ENCODE measurements at regions of chr13 and their contacts with region 1.

Region 1: GRCh38 chr13:30306762-30307193 is 573 bp downstream of the KATNAL1 start:
- DNase-seq: peak; percentile 92
- H3K4me3 Mint-ChIP-seq: peak overlapping the region; percentile 77
- H3K27ac Mint-ChIP-seq: peak overlapping the region; percentile 78
- H3K4me1 Mint-ChIP-seq: peaks cover 49% of the 10 kb centered on the region
- H3K27me3 Mint-ChIP-seq: no peaks in the 10 kb centered on the region

Region 2: DNA sequence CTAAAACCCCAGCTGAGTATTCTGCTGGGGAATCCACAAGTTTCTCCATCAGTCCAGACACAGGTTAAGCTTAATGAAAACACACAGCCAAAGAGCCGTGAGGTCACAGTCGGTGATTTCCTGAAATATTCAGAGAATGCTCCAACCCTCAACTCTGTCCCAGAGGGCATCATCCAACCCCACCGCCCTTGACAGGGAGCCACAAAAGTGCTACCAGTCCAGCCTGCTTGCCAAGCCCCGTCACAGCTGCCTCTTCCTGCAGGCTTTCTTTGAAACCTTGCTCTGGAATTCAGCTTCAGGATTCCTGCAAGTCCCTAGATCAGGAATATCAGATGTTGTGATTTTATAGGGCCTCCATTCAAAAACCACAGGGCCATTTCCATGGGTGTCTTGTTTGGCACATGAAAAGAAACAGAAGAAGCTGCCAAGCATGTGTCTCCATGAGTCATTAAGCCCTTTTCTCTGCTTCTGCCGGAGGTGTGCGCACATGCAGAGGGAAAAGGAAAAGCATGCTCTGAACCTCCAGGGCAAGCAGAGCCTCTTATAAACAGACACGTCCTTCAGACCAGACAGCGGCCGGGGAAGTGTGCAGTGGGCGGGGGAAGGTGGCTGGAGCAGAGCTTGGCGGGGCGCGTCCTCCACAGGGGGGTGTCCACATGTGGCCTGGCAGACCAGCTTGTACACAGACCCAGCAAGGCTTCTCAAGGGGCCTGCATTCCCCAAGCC is 164.1 kb before region 1 on chr13:
- CTCF ChIA-PET with region 1: interaction called, 3 read pairs
- POLR2A ChIA-PET with region 1: interaction called, 25 read pairs
- DNase-seq: peak; percentile 53
- H3K4me3 Mint-ChIP-seq: no peak overlapping the region
- H3K27ac Mint-ChIP-seq: peak overlapping the region; percentile 71
- H3K4me1 Mint-ChIP-seq: peaks cover 62% of the 10 kb centered on the region
- H3K27me3 Mint-ChIP-seq: no peaks in the 10 kb centered on the region

Region 3: DNA sequence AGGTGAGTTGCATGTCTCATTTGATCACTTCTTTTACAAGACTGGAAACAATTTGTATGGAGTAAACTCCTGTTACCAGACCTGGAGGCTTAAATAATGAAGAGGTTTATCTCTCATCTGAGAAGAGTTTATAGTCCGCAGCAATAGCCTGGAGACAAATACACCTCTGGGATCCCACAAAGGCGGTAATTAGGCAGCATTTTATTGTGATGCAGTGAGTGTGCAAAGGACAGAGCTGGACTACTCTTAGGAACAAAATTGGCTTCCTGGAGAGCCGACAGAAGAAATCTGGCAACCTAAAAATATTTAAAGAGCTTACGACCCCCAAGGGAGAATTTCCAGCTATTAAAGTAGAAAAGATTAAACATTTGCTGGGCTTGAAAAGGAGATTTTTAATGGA is 12.4 kb after region 1 on chr13:
- CTCF ChIA-PET with region 1: interaction called, 4 read pairs
- POLR2A ChIA-PET with region 1: interaction called, 12 read pairs
- DNase-seq: no peak
- H3K4me3 Mint-ChIP-seq: no peak overlapping the region
- H3K27ac Mint-ChIP-seq: no peak overlapping the region
- H3K4me1 Mint-ChIP-seq: peaks cover 2% of the 10 kb centered on the region
- H3K27me3 Mint-ChIP-seq: no peaks in the 10 kb centered on the region

Region 4: GRCh38 chr13:30334663-30335386 is 28.0 kb after region 1 on chr13:
- CTCF ChIA-PET with region 1: interaction called, 10 read pairs
- POLR2A ChIA-PET with region 1: interaction called, 6 read pairs
- DNase-seq: peak; percentile 21
- H3K4me3 Mint-ChIP-seq: no peak overlapping the region
- H3K27ac Mint-ChIP-seq: no peak overlapping the region
- H3K4me1 Mint-ChIP-seq: peaks cover 17% of the 10 kb centered on the region
- H3K27me3 Mint-ChIP-seq: no peaks in the 10 kb centered on the region

Region 5: DNA sequence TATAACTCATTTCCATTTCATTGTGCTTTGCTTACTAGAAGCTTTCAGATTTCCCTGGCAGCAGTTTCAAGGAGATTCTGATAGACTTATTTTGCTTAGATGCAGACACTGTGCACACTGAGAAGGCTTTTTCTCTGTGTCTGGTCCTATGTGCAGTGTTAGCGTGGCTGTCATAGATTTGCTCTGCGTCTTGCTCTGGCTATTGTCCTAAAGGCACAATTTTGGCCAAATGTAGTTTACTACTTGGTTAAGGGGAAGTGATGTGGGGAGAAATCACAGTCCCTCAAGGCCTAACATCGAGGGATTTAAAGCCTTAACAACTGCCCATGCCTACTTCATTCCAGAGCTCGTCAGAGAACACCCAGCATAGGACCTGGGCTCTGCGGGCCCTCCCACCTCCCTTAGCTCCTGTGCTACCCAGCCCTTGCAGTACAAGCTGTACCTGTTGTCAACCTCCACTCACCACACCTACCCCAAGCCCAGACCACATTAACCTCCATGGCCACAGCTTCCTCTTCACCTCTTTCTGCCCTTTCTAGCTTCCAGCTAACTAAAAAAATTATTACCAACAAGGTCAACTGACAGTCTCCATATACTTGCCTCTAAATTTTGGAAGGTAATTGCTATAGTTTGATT is 39.5 kb after region 1 on chr13:
- CTCF ChIA-PET with region 1: interaction called, 6 read pairs
- POLR2A ChIA-PET with region 1: interaction called, 18 read pairs
- DNase-seq: peak; percentile 91
- H3K4me3 Mint-ChIP-seq: peak overlapping the region; percentile 38
- H3K27ac Mint-ChIP-seq: peak overlapping the region; percentile 60
- H3K4me1 Mint-ChIP-seq: peaks cover 37% of the 10 kb centered on the region
- H3K27me3 Mint-ChIP-seq: no peaks in the 10 kb centered on the region

Region 6: DNA sequence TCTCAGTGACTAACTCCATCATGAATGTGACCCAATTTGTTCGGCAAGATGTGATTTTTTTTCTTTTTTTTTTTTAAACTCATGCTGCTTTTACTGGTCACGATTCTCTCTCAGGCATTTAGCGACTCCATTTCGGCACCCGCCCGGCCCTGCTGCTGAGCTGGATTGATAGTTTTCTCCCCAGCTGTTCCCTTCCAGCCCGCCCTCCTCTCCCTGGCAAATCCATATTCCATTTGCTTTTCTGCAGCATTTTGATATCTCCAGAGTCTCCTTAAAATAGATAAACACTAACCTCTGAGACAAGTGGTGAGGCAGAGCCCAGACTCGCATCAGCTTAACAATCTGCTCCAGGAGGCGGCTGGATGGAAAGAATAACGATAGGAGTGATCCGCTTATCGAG is 56.1 kb after region 1 on chr13:
- CTCF ChIA-PET with region 1: no interaction called
- POLR2A ChIA-PET with region 1: no interaction called
- DNase-seq: no peak
- H3K4me3 Mint-ChIP-seq: no peak overlapping the region
- H3K27ac Mint-ChIP-seq: no peak overlapping the region
- H3K4me1 Mint-ChIP-seq: peaks cover 10% of the 10 kb centered on the region
- H3K27me3 Mint-ChIP-seq: no peaks in the 10 kb centered on the region

Measured in activated CD4-positive, alpha-beta memory T cell treated with anti-CD3 and anti-CD28 coated beads, Interleukin-2, amount 10 ng/mL, durations not matched to agents 7 days and 5 days (primary cell).